Activated CD4-positive, alpha-beta T cell treated with anti-CD3 and anti-CD28 coated beads for 36 hours (primary cell): ENCODE measurements at regions of chr3 and their contacts with region 1.

Region 1: GRCh38 chr3:87313641-87314040 is 37.3 kb upstream of the POU1F1 start:
- DNase-seq: peak; percentile 13
- ATAC-seq: peak; percentile 94
- H3K4me3 Mint-ChIP-seq: no peak overlapping the region
- H3K27ac Mint-ChIP-seq: no peak overlapping the region
- H3K4me1 Mint-ChIP-seq: peaks cover 9% of the 10 kb centered on the region
- H3K27me3 Mint-ChIP-seq: peaks cover 5% of the 10 kb centered on the region

Region 2: DNA sequence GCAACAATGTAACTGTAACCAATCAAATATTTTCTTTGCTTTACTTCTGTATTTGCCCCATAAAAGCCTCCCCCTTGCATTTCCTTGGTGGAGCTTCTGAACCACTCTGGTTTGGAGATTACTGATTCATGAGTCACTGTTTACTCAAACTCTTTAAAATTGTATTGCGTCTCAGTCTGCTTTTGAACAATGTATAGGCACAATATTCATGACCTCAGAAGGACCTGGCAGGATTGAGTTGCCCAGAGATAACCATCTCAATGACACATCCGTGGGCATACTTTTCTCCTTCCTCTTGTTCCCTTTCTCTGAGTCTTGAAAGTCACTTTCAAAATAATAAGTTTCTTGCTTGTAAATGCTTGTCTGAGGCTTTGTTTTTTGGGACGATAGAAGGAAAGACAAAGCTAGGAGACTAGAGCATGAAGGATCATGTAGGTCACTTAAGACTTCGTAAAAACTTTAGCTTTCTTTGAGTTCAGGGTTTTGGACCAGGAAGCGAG is 19.8 kb after region 1 on chr3:
- CTCF ChIA-PET with region 1: no interaction called
- POLR2A ChIA-PET with region 1: no interaction called
- intact Hi-C with region 1: loop called in 1 of 2 experiments (anchors 1 kb)
- DNase-seq: peak; percentile 9
- ATAC-seq: peak; percentile 86
- H3K4me3 Mint-ChIP-seq: no peak overlapping the region
- H3K27ac Mint-ChIP-seq: no peak overlapping the region
- H3K4me1 Mint-ChIP-seq: peaks cover 13% of the 10 kb centered on the region
- H3K27me3 Mint-ChIP-seq: peaks cover 2% of the 10 kb centered on the region

Region 3: GRCh38 chr3:87553058-87553457 is 239.4 kb after region 1 on chr3:
- CTCF ChIA-PET with region 1: no interaction called
- POLR2A ChIA-PET with region 1: no interaction called
- intact Hi-C with region 1: no loop called
- DNase-seq: no peak
- ATAC-seq: no peak
- H3K4me3 Mint-ChIP-seq: no peak overlapping the region
- H3K27ac Mint-ChIP-seq: no peak overlapping the region
- H3K4me1 Mint-ChIP-seq: no peaks in the 10 kb centered on the region
- H3K27me3 Mint-ChIP-seq: no peaks in the 10 kb centered on the region

Region 4: GRCh38 chr3:88334187-88334868 is 1020.7 kb after region 1 on chr3:
- CTCF ChIA-PET with region 1: no interaction called
- POLR2A ChIA-PET with region 1: no interaction called
- intact Hi-C with region 1: no loop called
- DNase-seq: no peak
- ATAC-seq: no peak
- H3K4me3 Mint-ChIP-seq: no peak overlapping the region
- H3K27ac Mint-ChIP-seq: no peak overlapping the region
- H3K4me1 Mint-ChIP-seq: no peaks in the 10 kb centered on the region
- H3K27me3 Mint-ChIP-seq: no peaks in the 10 kb centered on the region